Prostate gland (tissue), 2 donors: ENCODE measurements at regions of chr10 and their contacts with region 1.

Region 1: GRCh38 chr10:88254091-88254490 is 329.0 kb downstream of the RNLS start:
- DNase-seq: no peak
- H3K4me3 ChIP-seq: no peak overlapping the region
- H3K27ac ChIP-seq: no peak overlapping the region
- H3K4me1 ChIP-seq: no peaks in the 10 kb centered on the region
- H3K27me3 ChIP-seq: no peaks in the 10 kb centered on the region
- CTCF ChIP-seq: no peak
- POLR2A ChIP-seq: no peak

Region 2: DNA sequence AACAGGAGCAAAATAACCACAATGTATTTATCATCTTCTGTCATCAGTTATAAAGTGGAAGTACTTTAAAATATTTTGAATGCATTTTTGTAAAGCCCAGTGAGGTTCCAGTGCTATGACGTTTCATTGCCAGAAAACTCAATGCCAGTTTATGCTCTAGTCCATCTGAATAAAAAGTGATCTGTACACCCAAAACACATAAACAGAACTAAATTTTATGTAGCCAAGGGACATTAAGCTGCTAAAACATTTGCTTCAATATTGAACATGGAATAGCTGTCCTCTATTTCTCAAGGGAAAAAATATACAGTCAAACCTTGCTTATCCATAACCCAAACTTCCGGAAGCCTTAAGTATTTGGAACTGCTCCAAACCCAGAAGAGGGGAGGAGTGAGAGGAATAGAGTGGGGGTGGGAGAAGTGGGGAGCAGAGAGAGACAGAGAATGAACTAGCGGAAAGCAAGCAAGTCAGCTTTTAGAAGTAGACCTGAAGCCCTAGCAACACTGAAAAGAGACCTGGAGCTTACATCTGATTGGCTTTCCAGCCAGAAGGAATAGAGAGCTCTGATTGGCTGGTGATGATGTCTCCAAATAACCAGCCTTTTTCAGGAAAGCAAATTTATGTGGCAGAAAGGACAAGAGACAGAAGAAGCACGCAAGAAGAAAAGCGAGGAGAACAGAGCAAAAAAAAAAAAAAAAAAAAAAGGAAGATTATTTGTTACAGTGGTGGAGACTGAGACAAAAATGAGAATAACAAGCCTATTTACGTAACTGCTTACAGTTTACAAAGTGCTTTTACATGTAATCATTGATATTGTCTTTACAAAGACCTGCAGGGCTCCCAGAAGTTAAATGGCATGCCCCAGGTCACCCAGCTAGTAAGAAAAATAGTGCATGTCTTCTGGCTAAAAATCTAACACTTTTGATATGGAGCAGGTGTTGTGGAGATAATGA is 133.0 kb after region 1 on chr10:
- intact Hi-C with region 1: loop called (anchors 10 kb)
- DNase-seq: no peak
- H3K4me3 ChIP-seq: no peak overlapping the region
- H3K27ac ChIP-seq: peak overlapping the region in 1 of 2 donors; percentile 16
- H3K4me1 ChIP-seq: no peaks in the 10 kb centered on the region
- H3K27me3 ChIP-seq: no peaks in the 10 kb centered on the region
- CTCF ChIP-seq: no peak
- POLR2A ChIP-seq: no peak